OCI-LY7 (cell line): ENCODE measurements at regions of chr17 and their contacts with region 1.

Region 1: GRCh38 chr17:77212081-77212834 is 71.5 kb downstream of the SEC14L1 start:
- DNase-seq: peak; percentile 92
- H3K4me3 ChIP-seq: peak overlapping the region; percentile 54
- H3K27ac ChIP-seq: peak overlapping the region; percentile 87
- H3K4me1 ChIP-seq: peaks cover 53% of the 10 kb centered on the region
- CTCF ChIP-seq: no peak

Region 2: DNA sequence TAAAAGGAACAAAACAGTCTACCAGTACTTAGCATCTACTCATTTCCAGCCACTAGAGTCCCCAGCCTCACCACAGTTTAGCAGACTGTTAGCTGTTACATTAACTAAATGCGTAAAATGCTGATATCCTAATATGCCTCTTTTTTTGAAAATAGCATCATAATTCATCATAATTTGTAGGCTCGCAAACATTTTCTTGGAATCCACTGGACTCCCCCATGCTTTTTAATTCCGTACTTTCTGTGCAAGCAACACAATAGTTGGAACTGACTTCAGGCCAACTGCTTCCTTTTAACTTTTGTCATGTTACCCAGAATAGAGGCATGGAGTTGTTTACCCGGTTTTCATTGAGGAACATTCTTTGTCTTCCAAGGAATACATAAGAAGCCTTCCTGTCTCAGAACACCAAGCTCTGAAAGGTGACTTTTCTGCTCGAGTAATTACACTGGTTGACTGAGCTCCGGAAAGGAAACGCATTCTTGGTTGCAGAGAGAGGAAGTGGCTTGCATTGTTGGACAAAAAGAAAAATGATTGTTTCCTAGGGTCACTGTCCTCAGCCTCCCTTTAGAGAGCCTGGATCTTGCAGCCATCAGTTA is 102.4 kb before region 1 on chr17:
- CTCF ChIA-PET with region 1: no interaction called
- POLR2A ChIA-PET with region 1: interaction called, 7 read pairs
- intact Hi-C with region 1: loop called (anchors 1 kb)
- DNase-seq: peak; percentile 85
- H3K4me3 ChIP-seq: peak overlapping the region; percentile 27
- H3K27ac ChIP-seq: no peak overlapping the region
- H3K4me1 ChIP-seq: peaks cover 38% of the 10 kb centered on the region
- CTCF ChIP-seq: peak; percentile 49; the same call in 1 of the 2 replicates

Region 3: GRCh38 chr17:77247048-77247541 is 34.8 kb after region 1 on chr17:
- CTCF ChIA-PET with region 1: interaction called, 4 read pairs
- POLR2A ChIA-PET with region 1: no interaction called
- intact Hi-C with region 1: loop called (anchors 1 kb)
- DNase-seq: peak; percentile 91
- H3K4me3 ChIP-seq: peak overlapping the region; percentile 61
- H3K27ac ChIP-seq: no peak overlapping the region
- H3K4me1 ChIP-seq: peaks cover 14% of the 10 kb centered on the region
- CTCF ChIP-seq: peak; percentile 94